CD8-positive, alpha-beta T cell (primary cell): ENCODE measurements at regions of chr11 and their contacts with region 1.

Region 1: DNA sequence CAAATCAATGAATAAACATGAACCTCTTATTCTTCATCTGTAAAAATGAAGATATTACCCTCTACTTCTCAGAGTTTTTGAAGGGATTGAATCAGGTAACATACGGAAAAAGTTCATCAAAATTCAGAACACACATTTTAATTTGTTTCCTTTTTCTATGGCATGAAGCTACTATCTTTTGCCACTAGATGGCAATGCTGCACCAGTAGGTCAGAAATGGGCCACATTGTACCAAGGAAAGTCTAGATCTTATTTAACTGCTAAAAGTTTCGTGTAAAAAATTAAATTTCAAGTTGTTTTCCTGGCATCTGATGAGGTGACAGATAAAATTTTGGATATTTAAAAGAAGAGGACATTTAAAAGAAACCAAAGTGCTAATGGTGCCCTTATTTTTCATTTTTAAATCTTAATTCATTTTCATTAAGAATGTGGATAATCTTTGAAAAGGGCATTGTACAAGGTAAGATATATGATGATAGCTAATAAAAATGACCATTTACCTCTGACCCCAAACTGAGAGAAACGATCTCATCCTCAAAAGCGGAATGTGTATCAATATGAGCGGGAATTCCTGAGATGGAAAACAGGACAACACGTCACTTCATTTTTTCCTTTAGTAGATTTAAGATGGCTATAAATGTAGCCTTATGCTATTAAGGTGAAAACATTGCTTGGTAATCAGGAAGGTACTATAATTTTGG is 16.1 kb downstream of the ALKBH8 start:
- DNase-seq: peak in 4 of 9 experiments; percentile 19 to 65 (median 42)
- ATAC-seq: peak; percentile 64
- H3K4me3 ChIP-seq: no peak overlapping the region
- H3K4me3 Mint-ChIP-seq: no peak overlapping the region
- H3K27ac ChIP-seq: no peak overlapping the region
- H3K27ac Mint-ChIP-seq: no peak overlapping the region
- H3K4me1 ChIP-seq: no peaks in the 10 kb centered on the region
- H3K4me1 Mint-ChIP-seq: peaks cover 2% of the 10 kb centered on the region
- H3K27me3 ChIP-seq: no peaks in the 10 kb centered on the region
- H3K27me3 Mint-ChIP-seq: no peaks in the 10 kb centered on the region
- CTCF ChIP-seq: peak; percentile 97

Region 2: GRCh38 chr11:107157146-107157808 is 392.1 kb before region 1 on chr11:
- CTCF ChIA-PET with region 1: no interaction called
- POLR2A ChIA-PET with region 1: no interaction called
- intact Hi-C with region 1: no loop called
- DNase-seq: no peak
- ATAC-seq: no peak
- H3K4me3 ChIP-seq: no peak overlapping the region
- H3K4me3 Mint-ChIP-seq: no peak overlapping the region
- H3K27ac ChIP-seq: no peak overlapping the region
- H3K27ac Mint-ChIP-seq: no peak overlapping the region
- H3K4me1 ChIP-seq: no peaks in the 10 kb centered on the region
- H3K4me1 Mint-ChIP-seq: no peaks in the 10 kb centered on the region
- H3K27me3 ChIP-seq: no peaks in the 10 kb centered on the region
- H3K27me3 Mint-ChIP-seq: no peaks in the 10 kb centered on the region
- CTCF ChIP-seq: no peak

Region 3: GRCh38 chr11:107538821-107539220 is 10.6 kb before region 1 on chr11:
- CTCF ChIA-PET with region 1: interaction called, 45 read pairs
- POLR2A ChIA-PET with region 1: no interaction called
- intact Hi-C with region 1: no loop called
- DNase-seq: no peak
- ATAC-seq: no peak
- H3K4me3 ChIP-seq: no peak overlapping the region
- H3K4me3 Mint-ChIP-seq: no peak overlapping the region
- H3K27ac ChIP-seq: no peak overlapping the region
- H3K27ac Mint-ChIP-seq: no peak overlapping the region
- H3K4me1 ChIP-seq: no peaks in the 10 kb centered on the region
- H3K4me1 Mint-ChIP-seq: no peaks in the 10 kb centered on the region
- H3K27me3 ChIP-seq: no peaks in the 10 kb centered on the region
- H3K27me3 Mint-ChIP-seq: no peaks in the 10 kb centered on the region
- CTCF ChIP-seq: no peak

Region 4: DNA sequence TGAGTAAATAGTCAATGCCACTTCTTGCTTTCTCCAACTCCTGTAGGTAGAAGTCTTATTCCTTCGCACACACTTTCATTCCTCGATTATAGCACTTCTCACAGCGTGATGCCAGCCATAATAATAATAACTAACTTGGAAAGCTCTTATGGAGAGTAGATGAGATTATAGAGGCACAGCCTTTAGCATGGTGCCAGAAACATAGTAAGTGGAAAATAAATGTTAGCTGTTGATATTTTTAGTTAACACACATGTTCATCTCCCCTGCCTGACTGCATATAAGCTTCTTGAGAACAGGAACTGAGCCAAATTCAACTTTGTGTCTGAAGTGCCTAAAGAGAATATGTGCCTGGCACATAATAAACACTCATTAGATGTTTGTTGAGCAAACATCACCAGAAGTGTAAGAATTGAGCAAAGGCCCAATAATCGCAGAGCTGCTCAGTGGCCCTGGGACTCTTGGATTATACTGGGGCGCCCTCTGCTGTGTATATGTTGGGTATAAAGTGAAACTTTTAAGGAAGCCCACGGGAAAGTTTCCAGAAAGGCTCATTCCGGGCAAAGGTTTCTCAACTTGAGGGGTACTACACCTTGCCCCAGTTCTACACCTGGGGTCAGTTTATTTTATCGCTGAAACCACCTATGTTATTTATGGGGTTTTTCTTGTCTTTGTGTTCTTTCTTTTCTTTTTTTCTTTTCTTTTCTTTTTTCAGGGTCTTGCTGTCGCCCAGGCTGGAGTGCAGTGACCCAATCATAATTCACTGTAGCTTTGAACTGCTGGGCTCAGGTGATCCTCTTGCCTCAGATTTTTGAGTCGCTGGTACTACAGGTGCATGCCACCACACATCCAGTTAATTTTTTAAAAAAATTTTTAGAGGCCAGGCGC is 140.2 kb after region 1 on chr11:
- CTCF ChIA-PET with region 1: interaction called, 27 read pairs
- POLR2A ChIA-PET with region 1: no interaction called
- intact Hi-C with region 1: loop called (anchors 1 kb)
- DNase-seq: peak in 8 of 9 experiments; percentile 30 to 63 (median 52)
- ATAC-seq: peak; percentile 58
- H3K4me3 ChIP-seq: no peak overlapping the region
- H3K4me3 Mint-ChIP-seq: no peak overlapping the region
- H3K27ac ChIP-seq: no peak overlapping the region
- H3K27ac Mint-ChIP-seq: no peak overlapping the region
- H3K4me1 ChIP-seq: no peaks in the 10 kb centered on the region
- H3K4me1 Mint-ChIP-seq: no peaks in the 10 kb centered on the region
- H3K27me3 ChIP-seq: peaks cover 0 to 4% of the 10 kb centered on the region in 2 experiments
- H3K27me3 Mint-ChIP-seq: peaks cover 9% of the 10 kb centered on the region
- CTCF ChIP-seq: peak; percentile 47

Region 5: DNA sequence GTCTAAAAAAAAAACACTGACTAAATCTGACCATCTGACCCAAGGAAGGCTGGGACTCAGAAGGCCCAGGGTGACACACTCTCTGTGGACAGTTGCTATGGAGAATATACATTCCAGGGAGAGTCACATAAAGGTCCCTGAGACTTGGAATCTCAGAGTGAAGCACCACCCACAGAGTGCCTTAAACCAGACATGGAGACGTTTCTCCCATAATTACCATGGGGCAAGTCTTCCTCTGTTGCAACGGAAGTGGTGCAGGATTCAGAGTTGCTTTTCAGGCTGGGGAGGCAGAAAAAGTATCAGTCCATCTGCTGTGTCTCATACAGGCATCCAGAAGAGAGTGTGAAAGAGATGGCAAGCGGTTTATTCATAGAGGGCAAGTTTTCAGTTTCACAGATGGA is 221.1 kb after region 1 on chr11:
- CTCF ChIA-PET with region 1: interaction called, 10 read pairs
- POLR2A ChIA-PET with region 1: no interaction called
- intact Hi-C with region 1: loop called in 1 of 2 experiments (anchors 1 kb)
- DNase-seq: no peak
- ATAC-seq: no peak
- H3K4me3 ChIP-seq: no peak overlapping the region
- H3K4me3 Mint-ChIP-seq: no peak overlapping the region
- H3K27ac ChIP-seq: no peak overlapping the region
- H3K27ac Mint-ChIP-seq: no peak overlapping the region
- H3K4me1 ChIP-seq: no peaks in the 10 kb centered on the region
- H3K4me1 Mint-ChIP-seq: no peaks in the 10 kb centered on the region
- H3K27me3 ChIP-seq: no peaks in the 10 kb centered on the region
- H3K27me3 Mint-ChIP-seq: peaks cover 10% of the 10 kb centered on the region
- CTCF ChIP-seq: no peak

Region 6: GRCh38 chr11:107898270-107898669 is 348.9 kb after region 1 on chr11:
- CTCF ChIA-PET with region 1: no interaction called
- POLR2A ChIA-PET with region 1: no interaction called
- intact Hi-C with region 1: loop called in 1 of 2 experiments (anchors 5 kb)
- DNase-seq: peak in 2 of 9 experiments; percentile 36 to 43
- ATAC-seq: peak; percentile 63
- H3K4me3 ChIP-seq: no peak overlapping the region
- H3K4me3 Mint-ChIP-seq: no peak overlapping the region
- H3K27ac ChIP-seq: no peak overlapping the region
- H3K27ac Mint-ChIP-seq: no peak overlapping the region
- H3K4me1 ChIP-seq: no peaks in the 10 kb centered on the region
- H3K4me1 Mint-ChIP-seq: no peaks in the 10 kb centered on the region
- H3K27me3 ChIP-seq: peaks cover 0 to 5% of the 10 kb centered on the region in 2 experiments
- H3K27me3 Mint-ChIP-seq: no peaks in the 10 kb centered on the region
- CTCF ChIP-seq: peak; percentile 37